Heart left ventricle (tissue), 16 donors: ENCODE measurements at regions of chr9 and their contacts with region 1.

Region 1: GRCh38 chr9:77841739-77842386 is 189.7 kb downstream of the GNAQ start:
- DNase-seq: no peak
- ATAC-seq: peak in 1 of 4 donors; percentile 13
- H3K4me3 ChIP-seq: no peak overlapping the region
- H3K27ac ChIP-seq: no peak overlapping the region
- H3K4me1 ChIP-seq: peaks cover 0 to 55% (median 17%) of the 10 kb centered on the region in 12 donors
- H3K27me3 ChIP-seq: no peaks in the 10 kb centered on the region
- CTCF ChIP-seq: peak in 9 of 12 donors; percentile 15 to 46 (median 30)
- POLR2A ChIP-seq: no peak

Region 2: DNA sequence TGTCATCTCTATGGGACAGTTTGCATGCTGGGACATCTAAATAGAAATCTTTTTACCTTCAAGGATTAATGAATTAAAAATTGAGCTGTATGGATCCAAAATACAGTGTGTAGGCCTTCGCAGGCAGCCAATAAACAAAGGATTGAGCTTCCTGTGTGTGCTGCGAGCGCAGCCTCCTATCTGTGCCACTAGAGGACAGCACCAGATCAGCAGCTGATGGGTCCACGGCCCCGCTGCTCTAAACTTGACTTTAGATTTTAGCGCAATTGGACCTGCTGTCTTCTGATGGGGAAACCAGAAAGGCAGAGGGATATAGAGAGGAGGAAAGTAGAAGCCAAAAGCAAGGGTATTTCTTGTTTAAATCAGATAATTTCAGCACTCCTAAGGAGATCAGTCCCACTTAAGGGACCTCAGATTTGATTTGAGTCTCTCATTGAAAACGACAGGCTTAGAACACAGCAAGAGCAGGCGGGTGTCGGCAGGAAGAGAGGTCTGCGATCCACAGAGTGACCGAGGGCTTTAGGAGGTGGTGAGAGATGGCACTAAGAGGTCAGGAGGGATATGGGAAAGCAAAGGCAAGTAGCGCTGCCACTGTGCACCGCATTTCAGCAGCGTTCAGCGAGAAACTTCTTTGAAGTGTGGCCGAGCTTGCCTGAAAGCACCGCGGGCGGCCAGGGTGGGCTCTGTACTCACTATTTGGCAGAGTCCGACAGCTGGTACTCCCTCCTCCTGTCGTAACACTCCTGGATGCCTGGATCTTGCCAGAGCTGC is 408.0 kb before region 1 on chr9:
- intact Hi-C with region 1: loop called in 1 of 10 experiments (anchors 10 kb)
- DNase-seq: peak; percentile 45 to 74 (median 52)
- ATAC-seq: peak; percentile 68 to 89 (median 82)
- H3K4me3 ChIP-seq: no peak overlapping the region
- H3K27ac ChIP-seq: no peak overlapping the region
- H3K4me1 ChIP-seq: peaks cover 0 to 5% (median 0%) of the 10 kb centered on the region in 12 donors
- H3K27me3 ChIP-seq: no peaks in the 10 kb centered on the region
- CTCF ChIP-seq: peak; percentile 84 to 98 (median 92)
- POLR2A ChIP-seq: no peak

Region 3: DNA sequence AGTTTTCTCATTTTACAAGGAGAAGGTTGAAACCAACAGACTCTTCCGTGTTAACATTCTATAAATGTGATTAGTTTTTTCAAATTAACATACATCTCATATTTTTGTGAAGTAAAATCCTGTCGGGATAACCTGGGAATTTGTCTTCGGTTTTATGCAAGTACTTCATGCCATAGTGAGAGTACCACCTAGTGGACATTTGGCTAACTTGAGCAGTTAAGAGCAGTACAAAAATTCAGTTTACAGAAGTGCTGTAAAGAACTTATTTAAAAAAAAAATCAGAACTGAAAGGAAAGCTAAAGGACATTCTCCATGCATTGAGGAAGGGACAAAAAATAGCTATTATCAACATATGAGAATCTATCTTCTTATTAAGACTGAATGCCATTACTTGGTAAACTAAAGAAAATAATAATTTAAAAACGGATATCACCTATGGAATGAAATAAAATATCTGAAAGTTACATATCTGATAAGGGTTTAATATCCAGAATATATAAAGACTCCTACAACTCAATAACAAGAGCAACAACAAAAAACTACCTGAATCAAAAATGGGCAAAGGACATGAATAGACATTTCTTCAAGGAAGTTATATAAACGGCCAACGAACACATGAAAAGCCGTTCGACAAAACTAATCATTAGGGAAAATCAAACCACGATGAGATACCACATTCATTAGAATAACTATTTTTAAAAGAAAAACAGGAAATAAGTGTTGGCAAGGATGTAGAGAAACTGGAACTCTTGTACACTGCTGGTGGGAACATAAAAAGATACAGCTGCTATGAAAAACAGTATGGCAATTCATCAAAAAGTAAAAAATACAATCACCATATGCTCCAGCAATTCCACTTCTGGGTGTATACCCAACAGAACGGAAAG is 76.7 kb before region 1 on chr9:
- intact Hi-C with region 1: loop called in 1 of 10 experiments (anchors 10 kb)
- DNase-seq: no peak
- ATAC-seq: no peak
- H3K4me3 ChIP-seq: no peak overlapping the region
- H3K27ac ChIP-seq: peak overlapping the region in 1 of 12 donors; percentile 7
- H3K4me1 ChIP-seq: peaks cover 0 to 18% (median 2%) of the 10 kb centered on the region in 12 donors
- H3K27me3 ChIP-seq: no peaks in the 10 kb centered on the region
- CTCF ChIP-seq: peak in 10 of 12 donors; percentile 8 to 49 (median 32)
- POLR2A ChIP-seq: no peak

Region 4: DNA sequence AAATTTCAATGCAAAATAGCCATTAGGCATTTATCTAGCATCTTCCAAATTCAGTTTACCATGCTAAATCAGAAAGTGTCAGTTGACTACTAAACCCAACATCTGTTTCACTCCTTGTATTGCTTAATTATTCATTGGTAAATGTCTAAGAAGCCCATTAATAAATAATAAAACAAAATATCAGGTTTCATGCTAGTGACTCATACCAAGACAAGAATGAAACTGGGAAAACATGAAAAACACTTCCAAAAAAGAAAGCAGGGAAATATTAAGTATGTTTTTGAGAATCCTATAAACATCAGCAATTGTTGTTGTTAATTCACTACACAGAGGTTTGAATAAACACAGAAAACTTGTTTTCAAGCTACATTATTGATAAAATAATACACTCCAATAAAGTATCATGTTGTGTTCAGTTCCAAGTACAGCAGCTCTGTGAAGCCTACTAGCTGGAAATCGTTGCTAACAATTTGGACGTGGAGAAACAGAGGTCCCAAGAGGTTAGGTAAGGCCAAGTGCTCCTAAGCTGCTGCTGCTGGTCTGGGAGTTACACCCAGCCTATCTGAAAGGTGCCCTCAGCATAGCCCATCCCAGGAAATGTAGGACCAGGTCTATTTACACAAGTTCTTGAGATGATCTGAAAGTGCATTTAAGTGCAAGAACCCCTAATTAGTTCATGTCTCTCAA is 110.9 kb after region 1 on chr9:
- intact Hi-C with region 1: loop called in 1 of 10 experiments (anchors 10 kb)
- DNase-seq: no peak
- ATAC-seq: peak; percentile 16 to 65 (median 52)
- H3K4me3 ChIP-seq: peak overlapping the region in 1 of 12 donors; percentile 7
- H3K27ac ChIP-seq: peak overlapping the region in 9 of 12 donors; percentile 1 to 64 (median 23)
- H3K4me1 ChIP-seq: peaks cover 0 to 84% (median 41%) of the 10 kb centered on the region in 12 donors
- H3K27me3 ChIP-seq: no peaks in the 10 kb centered on the region
- CTCF ChIP-seq: no peak
- POLR2A ChIP-seq: no peak

Region 5: DNA sequence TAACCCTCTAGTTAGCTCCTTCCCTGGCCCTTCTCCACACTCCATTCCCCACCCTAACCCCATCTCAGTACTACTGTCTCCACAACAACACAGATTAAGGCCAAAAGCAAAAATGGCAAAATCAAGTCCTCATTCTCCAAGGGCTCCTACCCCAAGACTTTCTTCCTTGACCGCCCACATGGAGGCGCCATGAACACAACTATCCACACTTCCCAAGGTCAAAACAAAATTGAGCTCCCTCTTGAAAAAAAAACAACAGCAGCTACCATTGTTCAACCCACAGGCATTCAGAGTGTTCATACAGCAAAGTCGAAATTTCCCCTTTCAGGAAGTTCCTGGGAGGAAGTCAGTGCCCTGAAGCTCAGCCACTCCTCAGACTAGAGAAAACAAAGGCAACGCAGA is 135.3 kb after region 1 on chr9:
- intact Hi-C with region 1: loop called in 1 of 10 experiments (anchors 10 kb)
- DNase-seq: peak; percentile 55 to 71 (median 62)
- ATAC-seq: peak; percentile 67 to 91 (median 86)
- H3K4me3 ChIP-seq: peak overlapping the region in 2 of 12 donors; percentile 3 to 18
- H3K27ac ChIP-seq: peak overlapping the region in 11 of 12 donors; percentile 1 to 81 (median 51)
- H3K4me1 ChIP-seq: peaks cover 0 to 49% (median 25%) of the 10 kb centered on the region in 12 donors
- H3K27me3 ChIP-seq: no peaks in the 10 kb centered on the region
- CTCF ChIP-seq: peak; percentile 13 to 68 (median 58)
- POLR2A ChIP-seq: no peak